BJ (cell line): ENCODE measurements at regions of chr2 and their contacts with region 1.

Region 1: DNA sequence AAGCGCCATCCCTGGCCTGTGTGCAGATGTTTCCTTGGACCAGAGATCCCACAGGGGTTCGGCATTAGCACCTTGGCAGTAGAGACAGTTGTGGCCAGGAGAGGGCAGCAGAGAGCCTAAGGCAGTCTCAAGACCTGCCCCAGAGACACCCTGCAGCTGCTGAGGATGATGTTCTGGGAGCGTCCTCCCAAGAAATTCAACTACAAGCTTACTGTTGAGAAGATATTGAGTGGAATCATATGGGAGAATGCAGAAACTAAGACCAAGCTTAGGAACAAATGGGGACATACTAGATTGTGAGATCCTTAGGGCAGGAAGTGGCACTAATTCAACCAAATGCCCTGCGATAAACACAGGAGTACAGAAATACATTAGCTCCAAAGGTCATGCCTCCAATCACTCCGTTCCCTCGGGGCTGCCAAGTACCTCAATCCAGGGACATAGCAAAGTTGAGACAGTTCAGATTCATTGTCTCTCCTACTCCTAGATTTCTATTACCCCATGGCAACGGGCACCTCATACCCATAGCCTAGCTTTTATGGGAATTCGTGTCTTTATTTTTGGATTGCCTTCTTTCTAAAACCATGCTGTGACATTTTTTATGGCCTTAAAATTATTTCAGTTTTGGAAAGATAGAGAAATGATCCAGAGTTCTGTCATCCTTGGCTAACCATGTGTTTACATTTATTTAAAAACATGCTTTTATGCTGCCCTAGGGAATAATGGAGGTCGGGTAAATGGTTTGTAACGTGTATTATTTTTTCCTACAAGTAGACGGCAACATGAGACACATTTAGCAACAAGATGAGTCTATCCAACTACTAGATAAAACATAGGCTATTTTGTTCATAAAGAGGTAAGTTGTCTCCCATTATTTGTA is 2.2 kb upstream of the ERMN start:
- DNase-seq: no peak
- H3K4me3 ChIP-seq: no peak overlapping the region
- H3K27me3 ChIP-seq: peaks cover 2% of the 10 kb centered on the region
- CTCF ChIP-seq: peak; percentile 97

Region 2: DNA sequence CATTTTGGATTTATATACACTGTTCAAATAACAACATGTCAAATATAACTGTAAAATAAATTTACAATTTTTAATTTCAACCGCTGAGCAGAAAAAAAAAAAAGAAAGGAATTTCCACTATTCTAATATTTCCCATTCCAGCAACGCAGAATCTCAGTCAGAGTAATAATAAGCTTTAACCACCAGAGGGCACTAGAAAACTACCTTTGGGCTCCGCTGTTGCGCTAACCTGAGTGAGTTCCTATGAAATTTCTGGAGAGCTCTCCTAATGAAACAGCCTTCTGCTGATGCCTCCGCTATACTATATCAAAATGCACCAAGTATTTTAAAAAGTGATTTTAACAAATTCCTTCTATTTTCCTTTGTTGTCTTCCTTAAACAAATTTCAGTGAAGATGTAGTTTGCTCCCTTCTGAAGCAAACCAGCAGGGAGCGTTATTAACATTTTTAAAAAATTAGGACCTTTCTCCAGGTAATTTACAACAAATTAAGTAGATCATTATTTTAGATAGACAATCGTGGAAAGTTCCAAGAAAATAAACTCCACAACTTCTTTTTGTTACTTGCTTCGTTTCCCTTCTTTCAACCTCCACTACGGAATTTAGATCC is 25.3 kb before region 1 on chr2:
- CTCF ChIA-PET with region 1: interaction called, 308 read pairs
- POLR2A ChIA-PET with region 1: no interaction called
- DNase-seq: no peak
- H3K4me3 ChIP-seq: no peak overlapping the region
- H3K27me3 ChIP-seq: no peaks in the 10 kb centered on the region
- CTCF ChIP-seq: peak; percentile 70

Region 3: DNA sequence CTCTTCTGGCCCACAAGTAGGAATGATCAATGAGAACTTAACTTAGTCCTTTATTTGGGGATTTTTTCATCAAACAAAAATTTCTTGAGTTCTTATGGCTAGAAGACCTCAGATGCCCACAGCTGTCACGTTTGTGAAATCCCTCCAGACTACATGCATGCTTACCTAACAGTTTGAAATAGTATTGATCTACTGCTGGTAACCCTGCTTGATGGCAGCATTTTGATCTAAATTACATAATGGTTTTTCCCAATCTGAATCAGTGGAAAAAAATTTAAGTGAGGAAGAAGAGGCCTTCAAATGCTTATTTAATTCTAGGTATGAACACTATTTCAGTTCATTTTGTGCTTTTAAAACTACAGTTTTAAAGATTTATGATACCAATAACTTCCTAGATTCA is 16.2 kb before region 1 on chr2:
- CTCF ChIA-PET with region 1: interaction called, 308 read pairs
- POLR2A ChIA-PET with region 1: no interaction called
- DNase-seq: no peak
- H3K4me3 ChIP-seq: no peak overlapping the region
- H3K27me3 ChIP-seq: no peaks in the 10 kb centered on the region
- CTCF ChIP-seq: no peak